Naive thymus-derived CD4-positive, alpha-beta T cell (primary cell): ENCODE measurements at regions of chr4 and their contacts with region 1.

Region 1: GRCh38 chr4:140252742-140253555 is 99.0 kb upstream of the MAML3 start:
- DNase-seq: peak; percentile 29 to 78 (median 60)
- ATAC-seq: peak; percentile 78
- H3K4me3 ChIP-seq: peak overlapping the region; percentile 44
- H3K4me3 Mint-ChIP-seq: peak overlapping the region; percentile 42 to 85 (median 80)
- H3K27ac ChIP-seq: peak overlapping the region; percentile 29
- H3K27ac Mint-ChIP-seq: peak overlapping the region in 2 of 9 donors; percentile 30 to 33
- H3K4me1 ChIP-seq: no peaks in the 10 kb centered on the region
- H3K4me1 Mint-ChIP-seq: peaks cover 2 to 31% (median 11%) of the 10 kb centered on the region in 7 donors
- H3K27me3 ChIP-seq: peaks cover 0 to 7% of the 10 kb centered on the region in 2 donors
- H3K27me3 Mint-ChIP-seq: peaks cover 0 to 19% (median 3%) of the 10 kb centered on the region in 5 donors

Region 2: GRCh38 chr4:139734875-139735380 is 518.0 kb before region 1 on chr4:
- CTCF ChIA-PET with region 1: no interaction called
- POLR2A ChIA-PET with region 1: no interaction called
- intact Hi-C with region 1: loop called (anchors 1 kb)
- DNase-seq: peak; percentile 12 to 67 (median 45)
- ATAC-seq: peak; percentile 87
- H3K4me3 ChIP-seq: peak overlapping the region; percentile 44
- H3K4me3 Mint-ChIP-seq: peak overlapping the region; percentile 70 to 89 (median 78)
- H3K27ac ChIP-seq: no peak overlapping the region
- H3K27ac Mint-ChIP-seq: peak overlapping the region in 1 of 9 donors; percentile 29
- H3K4me1 ChIP-seq: peaks cover 0 to 5% of the 10 kb centered on the region in 2 donors
- H3K4me1 Mint-ChIP-seq: peaks cover 6 to 17% (median 13%) of the 10 kb centered on the region in 7 donors
- H3K27me3 ChIP-seq: no peaks in the 10 kb centered on the region
- H3K27me3 Mint-ChIP-seq: peaks cover 30 to 58% (median 39%) of the 10 kb centered on the region in 5 donors

Region 3: DNA sequence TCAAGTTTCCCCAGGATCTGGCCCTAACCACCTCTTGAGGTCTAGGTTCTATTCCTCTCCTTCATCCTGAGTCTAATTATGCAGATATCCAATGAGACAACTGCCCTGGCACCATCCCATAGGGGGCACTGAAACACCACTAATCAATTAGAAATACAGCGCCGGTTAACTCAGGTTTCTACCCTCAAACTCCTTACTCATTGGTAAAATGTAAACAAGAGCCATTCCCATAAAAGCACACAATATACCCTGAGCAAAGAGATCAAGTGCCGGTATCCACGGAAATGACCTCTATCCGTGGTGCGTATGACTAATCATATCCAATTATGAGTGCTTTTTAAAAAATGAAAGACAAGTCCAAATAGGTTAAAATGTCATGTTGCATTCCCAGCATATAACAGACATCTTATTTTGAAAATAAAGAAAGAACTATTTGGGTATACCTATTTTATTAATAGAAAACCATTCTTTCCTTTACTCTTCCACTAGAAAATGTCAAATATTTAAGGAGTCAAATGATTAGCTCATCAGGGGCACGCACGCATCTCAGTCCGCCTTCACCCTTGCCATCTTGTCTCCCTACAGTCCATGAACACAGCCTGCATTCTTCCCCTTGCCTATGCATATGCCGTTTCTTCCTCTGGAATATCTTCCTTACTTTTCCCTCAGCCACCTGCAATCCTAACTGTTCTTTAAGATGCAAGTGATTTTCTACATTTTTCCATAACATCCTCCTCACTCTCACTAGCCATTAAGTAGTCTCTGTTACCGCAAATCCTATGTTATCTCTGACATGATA is 240.1 kb before region 1 on chr4:
- CTCF ChIA-PET with region 1: interaction called, 70 read pairs
- POLR2A ChIA-PET with region 1: no interaction called
- intact Hi-C with region 1: loop called (anchors 1 kb)
- DNase-seq: peak; percentile 7 to 77 (median 66)
- ATAC-seq: peak; percentile 94
- H3K4me3 ChIP-seq: no peak overlapping the region
- H3K4me3 Mint-ChIP-seq: peak overlapping the region in 1 of 10 donors; percentile 1
- H3K27ac ChIP-seq: no peak overlapping the region
- H3K27ac Mint-ChIP-seq: peak overlapping the region in 1 of 9 donors; percentile 11
- H3K4me1 ChIP-seq: no peaks in the 10 kb centered on the region
- H3K4me1 Mint-ChIP-seq: peaks cover 5 to 9% (median 8%) of the 10 kb centered on the region in 7 donors
- H3K27me3 ChIP-seq: no peaks in the 10 kb centered on the region
- H3K27me3 Mint-ChIP-seq: peaks cover 0 to 39% (median 0%) of the 10 kb centered on the region in 5 donors

Region 4: GRCh38 chr4:140095694-140096482 is 157.1 kb before region 1 on chr4:
- CTCF ChIA-PET with region 1: no interaction called
- POLR2A ChIA-PET with region 1: no interaction called
- intact Hi-C with region 1: loop called in 1 of 2 experiments (anchors 2 kb)
- DNase-seq: peak in 8 of 9 donors; percentile 46 to 92 (median 71)
- ATAC-seq: peak; percentile 73
- H3K4me3 ChIP-seq: peak overlapping the region; percentile 39
- H3K4me3 Mint-ChIP-seq: peak overlapping the region; percentile 68 to 97 (median 88)
- H3K27ac ChIP-seq: peak overlapping the region; percentile 73
- H3K27ac Mint-ChIP-seq: peak overlapping the region; percentile 90 to 99 (median 95)
- H3K4me1 ChIP-seq: peaks cover 5 to 53% of the 10 kb centered on the region in 2 donors
- H3K4me1 Mint-ChIP-seq: peaks cover 51 to 83% (median 75%) of the 10 kb centered on the region in 7 donors
- H3K27me3 ChIP-seq: no peaks in the 10 kb centered on the region
- H3K27me3 Mint-ChIP-seq: peaks cover 0 to 2% (median 0%) of the 10 kb centered on the region in 5 donors

Region 5: DNA sequence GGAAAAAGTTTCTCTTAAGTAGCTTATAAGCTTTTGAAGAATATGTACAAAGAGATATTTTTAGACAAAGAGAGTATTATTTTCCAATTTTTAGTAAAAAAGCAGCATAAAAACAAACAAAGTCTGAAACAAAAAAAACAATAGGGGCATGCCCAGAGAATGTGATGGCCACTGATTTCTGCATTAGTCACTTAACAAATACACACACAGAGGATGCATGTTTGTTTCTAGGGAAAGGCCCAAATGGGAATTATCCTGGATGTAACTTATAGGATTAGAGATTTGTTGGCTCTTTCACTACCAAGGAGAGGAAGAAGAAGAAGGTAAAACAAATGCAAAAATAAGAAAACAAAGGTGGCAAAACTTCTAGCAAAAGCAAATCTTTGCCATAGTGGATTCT is 24.6 kb after region 1 on chr4:
- CTCF ChIA-PET with region 1: no interaction called
- POLR2A ChIA-PET with region 1: no interaction called
- intact Hi-C with region 1: no loop called
- DNase-seq: no peak
- ATAC-seq: no peak
- H3K4me3 ChIP-seq: no peak overlapping the region
- H3K4me3 Mint-ChIP-seq: no peak overlapping the region
- H3K27ac ChIP-seq: no peak overlapping the region
- H3K27ac Mint-ChIP-seq: no peak overlapping the region
- H3K4me1 ChIP-seq: no peaks in the 10 kb centered on the region
- H3K4me1 Mint-ChIP-seq: no peaks in the 10 kb centered on the region
- H3K27me3 ChIP-seq: no peaks in the 10 kb centered on the region
- H3K27me3 Mint-ChIP-seq: peaks cover 8 to 22% (median 16%) of the 10 kb centered on the region in 5 donors